Activated CD4-positive, alpha-beta T cell treated with anti-CD3 and anti-CD28 coated beads, Interleukin-2, amount 10 ng/mL, durations not matched to agents 24 days and 14 days (primary cell): ENCODE measurements at regions of chrX and their contacts with region 1.

Region 1: GRCh38 chrX:39174772-39175417 is 373.6 kb downstream of the MID1IP1 start:
- DNase-seq: peak; percentile 75
- H3K4me3 Mint-ChIP-seq: peak overlapping the region; percentile 57
- H3K27ac Mint-ChIP-seq: peak overlapping the region; percentile 87
- H3K4me1 Mint-ChIP-seq: peaks cover 18% of the 10 kb centered on the region
- H3K27me3 Mint-ChIP-seq: no peaks in the 10 kb centered on the region

Region 2: DNA sequence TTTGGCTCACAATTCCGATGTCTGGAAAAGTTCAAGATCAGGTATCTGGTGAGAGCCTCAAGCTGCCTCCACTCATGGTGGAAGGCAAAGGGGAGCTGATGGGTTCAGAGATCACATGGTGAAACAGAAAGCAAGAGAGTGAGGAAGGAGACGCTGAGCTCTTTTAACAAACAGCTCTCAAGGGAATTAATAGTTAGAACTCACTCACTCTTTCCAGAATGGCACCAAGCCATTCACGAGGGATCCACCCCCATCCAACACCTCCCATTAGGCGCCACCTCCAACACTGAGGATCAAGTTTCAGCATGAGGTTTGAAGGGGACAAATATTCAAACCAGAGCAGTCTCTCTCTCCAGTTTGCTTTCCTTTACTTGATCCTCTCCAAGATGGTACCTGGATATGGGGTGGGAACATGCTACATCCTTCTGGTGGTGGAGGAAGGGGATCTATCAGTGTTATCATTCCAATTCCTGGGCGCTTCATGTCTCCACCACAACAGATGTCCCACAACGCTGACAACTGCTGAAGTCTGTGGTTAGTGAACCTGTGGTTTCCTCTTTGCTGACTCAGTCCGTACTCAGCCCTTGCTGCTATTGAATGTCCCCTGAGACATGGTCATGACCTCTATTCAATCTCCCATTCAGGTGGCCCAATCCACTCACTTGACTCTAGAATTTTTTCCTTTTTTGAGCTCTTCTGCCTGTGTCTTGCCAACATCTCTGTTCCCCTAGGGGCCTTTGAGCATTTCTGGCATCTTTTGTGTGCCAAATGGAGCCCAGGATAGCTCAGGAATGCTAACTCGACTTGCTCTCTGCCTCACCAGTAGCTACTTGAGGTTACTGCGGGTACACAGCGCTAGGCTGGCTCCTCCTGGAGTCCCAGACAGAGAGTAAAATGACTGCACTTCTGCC is 21.6 kb after region 1 on chrX:
- intact Hi-C with region 1: loop called (anchors 1 kb)
- DNase-seq: peak; percentile 85
- H3K4me3 Mint-ChIP-seq: peak overlapping the region; percentile 47
- H3K27ac Mint-ChIP-seq: peak overlapping the region; percentile 91
- H3K4me1 Mint-ChIP-seq: peaks cover 47% of the 10 kb centered on the region
- H3K27me3 Mint-ChIP-seq: no peaks in the 10 kb centered on the region